ENCODE measurements at regions of chr11 and their contacts with region 1.

Region 1: GRCh38 chr11:65418711-65419459 is 3.7 kb upstream of the NEAT1 start:
- DNase-seq: peak; percentile 96
- H3K4me3 Mint-ChIP-seq: peak overlapping the region; percentile 100
- H3K27ac Mint-ChIP-seq: peak overlapping the region; percentile 100
- H3K4me1 Mint-ChIP-seq: peaks cover 55% of the 10 kb centered on the region
- H3K27me3 Mint-ChIP-seq: peaks cover 5% of the 10 kb centered on the region

Region 2: DNA sequence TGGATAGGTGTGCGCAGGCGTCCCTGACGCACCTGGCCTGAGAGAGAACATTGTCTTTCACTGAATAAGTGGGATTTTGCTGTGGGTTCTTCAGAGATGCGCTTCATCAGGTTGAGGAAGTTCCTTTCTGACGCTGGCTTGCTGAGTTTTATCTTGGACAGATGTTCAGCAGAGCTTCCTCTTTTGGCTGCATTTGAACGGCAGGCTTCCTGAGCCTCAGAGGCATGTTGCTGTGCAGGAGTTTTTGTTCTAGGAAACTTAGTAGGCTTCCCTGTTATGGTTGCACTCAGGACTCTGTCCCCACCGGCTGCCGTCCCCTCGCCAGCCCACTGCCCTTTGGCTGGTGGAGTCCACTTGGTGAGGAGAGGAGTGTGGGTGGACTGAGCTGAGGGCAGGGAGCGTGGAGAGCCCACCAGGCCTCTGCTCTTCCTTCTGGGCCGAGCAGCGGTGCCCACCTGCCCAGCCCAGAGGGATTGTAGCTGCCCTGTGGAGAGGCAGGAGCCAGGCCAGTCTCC is 15.2 kb before region 1 on chr11:
- intact Hi-C with region 1: no loop called
- DNase-seq: no peak
- H3K4me3 Mint-ChIP-seq: no peak overlapping the region
- H3K27ac Mint-ChIP-seq: no peak overlapping the region
- H3K4me1 Mint-ChIP-seq: peaks cover 8% of the 10 kb centered on the region
- H3K27me3 Mint-ChIP-seq: no peaks in the 10 kb centered on the region

Region 3: GRCh38 chr11:65432686-65433582 is 14.0 kb after region 1 on chr11:
- intact Hi-C with region 1: loop called (anchors 1 kb)
- DNase-seq: no peak
- H3K4me3 Mint-ChIP-seq: peak overlapping the region; percentile 54
- H3K27ac Mint-ChIP-seq: peak overlapping the region; percentile 76
- H3K4me1 Mint-ChIP-seq: peaks cover 79% of the 10 kb centered on the region
- H3K27me3 Mint-ChIP-seq: no peaks in the 10 kb centered on the region

Region 4: DNA sequence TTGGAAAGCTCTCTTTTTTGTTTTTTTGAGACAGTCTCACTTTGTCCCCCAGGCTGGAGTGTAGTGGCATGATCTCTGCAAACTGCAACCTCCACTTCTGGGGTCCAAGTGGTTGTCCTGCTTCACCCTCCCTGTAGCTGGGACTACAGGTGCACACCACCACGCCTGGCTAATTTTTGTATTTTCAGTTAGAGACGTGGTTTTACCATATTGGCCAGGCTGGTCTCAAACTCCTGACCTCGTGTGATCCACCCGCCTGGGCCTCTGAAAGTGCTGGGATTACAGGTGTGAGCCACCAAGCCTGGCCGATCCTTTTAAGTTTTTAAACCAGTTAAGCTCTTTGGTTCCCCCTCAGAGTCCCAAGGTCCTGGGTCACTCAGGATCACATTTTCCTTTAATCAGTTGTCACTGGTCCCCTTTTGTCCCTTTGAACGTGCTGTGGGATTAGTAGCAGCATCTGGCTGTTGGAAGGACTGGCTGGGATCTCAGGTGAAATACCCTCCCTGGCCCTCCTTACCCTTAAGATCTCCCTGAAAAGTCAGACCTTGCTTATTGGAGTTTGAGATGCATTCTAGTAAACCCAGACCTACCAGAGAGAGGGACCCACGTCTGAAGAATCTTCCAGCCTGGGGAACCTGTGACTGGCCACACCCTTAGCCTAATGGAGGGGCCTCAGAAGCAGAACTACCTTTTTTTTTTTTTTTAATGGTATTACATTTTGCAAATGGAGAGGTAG is 88.1 kb after region 1 on chr11:
- intact Hi-C with region 1: loop called (anchors 1 kb)
- DNase-seq: peak; percentile 81
- H3K4me3 Mint-ChIP-seq: no peak overlapping the region
- H3K27ac Mint-ChIP-seq: peak overlapping the region; percentile 92
- H3K4me1 Mint-ChIP-seq: peaks cover 55% of the 10 kb centered on the region
- H3K27me3 Mint-ChIP-seq: no peaks in the 10 kb centered on the region